ENCODE measurements at regions of chr3 and their contacts with region 1.

Region 1: GRCh38 chr3:31634481-31634880 is 101.8 kb downstream of the STT3B start:
- DNase-seq: no peak
- H3K4me3 Mint-ChIP-seq: no peak overlapping the region
- H3K27ac Mint-ChIP-seq: peak overlapping the region; percentile 24
- H3K4me1 Mint-ChIP-seq: peaks cover 41% of the 10 kb centered on the region
- H3K27me3 Mint-ChIP-seq: no peaks in the 10 kb centered on the region

Region 2: GRCh38 chr3:31462050-31462569 is 172.4 kb before region 1 on chr3:
- CTCF ChIA-PET with region 1: interaction called, 3 read pairs
- intact Hi-C with region 1: loop called (anchors 2 kb)
- DNase-seq: peak; percentile 56
- H3K4me3 Mint-ChIP-seq: peak overlapping the region; percentile 35
- H3K27ac Mint-ChIP-seq: peak overlapping the region; percentile 70
- H3K4me1 Mint-ChIP-seq: peaks cover 51% of the 10 kb centered on the region
- H3K27me3 Mint-ChIP-seq: no peaks in the 10 kb centered on the region

Region 3: DNA sequence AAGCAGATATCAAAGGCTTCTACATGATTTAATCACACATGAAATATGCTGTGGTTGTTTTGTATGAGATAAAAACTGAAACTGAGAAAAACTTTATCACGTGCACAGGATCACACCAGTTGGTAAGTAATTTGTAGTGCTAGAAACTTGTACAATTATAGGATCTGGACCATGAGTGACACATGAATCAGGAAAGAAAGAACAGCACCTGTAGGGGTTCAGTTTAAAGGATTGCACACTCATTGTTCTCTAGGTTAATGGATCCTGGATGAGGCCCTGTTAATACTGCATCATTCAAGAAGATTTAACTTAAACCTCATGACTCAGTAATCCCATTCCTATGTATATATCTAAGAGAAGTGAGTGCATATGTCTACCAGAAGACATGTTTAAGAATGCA is 13.8 kb before region 1 on chr3:
- CTCF ChIA-PET with region 1: no interaction called
- intact Hi-C with region 1: loop called (anchors 2 kb)
- DNase-seq: no peak
- H3K4me3 Mint-ChIP-seq: no peak overlapping the region
- H3K27ac Mint-ChIP-seq: peak overlapping the region; percentile 46
- H3K4me1 Mint-ChIP-seq: peaks cover 22% of the 10 kb centered on the region
- H3K27me3 Mint-ChIP-seq: no peaks in the 10 kb centered on the region

Region 4: GRCh38 chr3:31648286-31648968 is 13.9 kb after region 1 on chr3:
- CTCF ChIA-PET with region 1: no interaction called
- intact Hi-C with region 1: no loop called
- DNase-seq: no peak
- H3K4me3 Mint-ChIP-seq: no peak overlapping the region
- H3K27ac Mint-ChIP-seq: no peak overlapping the region
- H3K4me1 Mint-ChIP-seq: no peaks in the 10 kb centered on the region
- H3K27me3 Mint-ChIP-seq: no peaks in the 10 kb centered on the region

Region 5: GRCh38 chr3:31668219-31668618 is 33.7 kb after region 1 on chr3:
- CTCF ChIA-PET with region 1: no interaction called
- intact Hi-C with region 1: no loop called
- DNase-seq: no peak
- H3K4me3 Mint-ChIP-seq: no peak overlapping the region
- H3K27ac Mint-ChIP-seq: no peak overlapping the region
- H3K4me1 Mint-ChIP-seq: no peaks in the 10 kb centered on the region
- H3K27me3 Mint-ChIP-seq: peaks cover 3% of the 10 kb centered on the region

Region 6: GRCh38 chr3:31952205-31952604 is 317.7 kb after region 1 on chr3:
- CTCF ChIA-PET with region 1: no interaction called
- intact Hi-C with region 1: no loop called
- DNase-seq: no peak
- H3K4me3 Mint-ChIP-seq: no peak overlapping the region
- H3K27ac Mint-ChIP-seq: no peak overlapping the region
- H3K4me1 Mint-ChIP-seq: no peaks in the 10 kb centered on the region
- H3K27me3 Mint-ChIP-seq: peaks cover 11% of the 10 kb centered on the region

Measured in activated naive CD4-positive, alpha-beta T cell treated with anti-CD3 and anti-CD28 coated beads for 36 hours (primary cell).